HepG2 (cell line): ENCODE measurements at regions of chr6 and their contacts with region 1.

Region 1: DNA sequence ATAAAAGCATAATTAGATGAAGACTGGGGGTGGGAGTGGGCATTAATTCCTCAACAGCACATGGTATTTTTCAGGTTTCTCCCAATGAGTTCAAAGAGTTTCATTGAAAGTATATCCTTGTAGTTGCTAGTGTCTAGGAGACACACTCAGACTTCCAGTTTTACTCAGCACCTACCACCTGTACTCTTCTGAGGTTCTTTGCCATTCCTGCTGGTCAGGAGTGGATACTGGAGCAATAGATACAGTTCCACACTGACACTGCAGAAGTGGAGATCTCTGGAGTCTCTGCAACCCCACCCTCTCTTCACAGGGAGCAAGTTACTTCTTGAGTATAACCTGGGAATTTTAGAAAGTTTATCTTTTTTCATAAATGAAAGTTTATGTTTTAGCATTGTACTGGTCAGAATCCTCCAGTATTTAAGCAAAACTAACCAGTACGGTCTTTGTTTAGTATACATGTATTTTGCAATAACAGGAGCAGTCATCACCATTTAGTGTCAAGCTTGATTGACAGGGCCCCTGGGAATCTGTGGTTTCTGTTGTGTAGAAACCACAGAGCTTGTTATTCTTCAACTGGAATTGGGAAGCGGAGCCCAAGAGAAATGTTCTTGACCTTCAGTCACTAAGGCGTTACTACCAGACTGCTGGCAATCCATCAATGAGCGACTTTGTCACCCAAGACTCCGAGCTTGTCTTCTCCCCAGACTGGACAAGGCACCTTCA is 148.1 kb downstream of the ZDHHC14 start:
- DNase-seq: peak; percentile 73
- ATAC-seq: no peak
- H3K4me3 ChIP-seq: no peak overlapping the region
- H3K27ac ChIP-seq: peak overlapping the region; percentile 96
- H3K4me1 ChIP-seq: peaks cover 94% of the 10 kb centered on the region
- H3K27me3 ChIP-seq: no peaks in the 10 kb centered on the region
- CTCF ChIP-seq: no peak
- EP300 ChIP-seq: peak in 1 of 2 experiments; percentile 51; a peak in 1 of 4 replicates
- POLR2A ChIP-seq: no peak
- RAD21 ChIP-seq: no peak

Region 2: GRCh38 chr6:157264701-157265100 is 264.4 kb before region 1 on chr6:
- CTCF ChIA-PET with region 1: no interaction called
- POLR2A ChIA-PET with region 1: no interaction called
- in situ Hi-C with region 1: no loop called
- intact Hi-C with region 1: no loop called
- DNase-seq: no peak
- ATAC-seq: no peak
- H3K4me3 ChIP-seq: no peak overlapping the region
- H3K27ac ChIP-seq: no peak overlapping the region
- H3K4me1 ChIP-seq: peaks cover 10% of the 10 kb centered on the region
- H3K27me3 ChIP-seq: peaks cover 8 to 53% of the 10 kb centered on the region in 2 experiments; a peak in 4 of 5 replicates
- CTCF ChIP-seq: no peak
- EP300 ChIP-seq: no peak
- POLR2A ChIP-seq: no peak
- RAD21 ChIP-seq: no peak

Region 3: GRCh38 chr6:157379656-157380454 is 149.2 kb before region 1 on chr6:
- CTCF ChIA-PET with region 1: no interaction called
- POLR2A ChIA-PET with region 1: interaction called, 7 read pairs
- in situ Hi-C with region 1: no loop called
- intact Hi-C with region 1: loop called (anchors 2 kb)
- DNase-seq: peak; percentile 90
- ATAC-seq: peak; percentile 94
- H3K4me3 ChIP-seq: peak overlapping the region; percentile 91 to 95 (median 92)
- H3K27ac ChIP-seq: peak overlapping the region; percentile 56
- H3K4me1 ChIP-seq: peaks cover 47% of the 10 kb centered on the region
- H3K27me3 ChIP-seq: no peaks in the 10 kb centered on the region; a peak in 1 of 5 replicates
- CTCF ChIP-seq: peak; percentile 19; the same call in 1 of the 2 replicates
- EP300 ChIP-seq: no peak
- POLR2A ChIP-seq: peak in 1 of 2 experiments; percentile 49; a peak in 2 of 4 replicates
- RAD21 ChIP-seq: no peak

Region 4: DNA sequence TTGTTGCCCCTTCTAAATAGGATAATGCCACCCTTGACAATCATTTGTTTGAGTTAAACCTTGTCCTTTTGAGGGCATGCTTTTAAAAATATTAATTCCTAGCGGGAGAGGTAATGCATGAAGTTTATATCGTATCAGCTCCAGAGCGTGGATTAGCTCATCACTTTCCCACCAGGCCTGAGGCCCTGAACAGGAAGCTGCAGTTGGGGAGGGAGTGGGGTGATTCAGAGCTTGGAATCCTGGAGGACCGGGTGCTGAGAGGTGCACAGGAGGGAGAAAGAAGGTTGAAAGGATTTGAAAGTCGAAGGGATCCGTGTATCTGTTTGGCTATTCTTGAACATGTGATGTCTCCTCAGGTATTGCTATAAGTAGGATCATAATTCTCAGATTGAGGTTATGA is 123.1 kb before region 1 on chr6:
- CTCF ChIA-PET with region 1: no interaction called
- POLR2A ChIA-PET with region 1: no interaction called
- in situ Hi-C with region 1: no loop called
- intact Hi-C with region 1: no loop called
- DNase-seq: no peak
- ATAC-seq: no peak
- H3K4me3 ChIP-seq: no peak overlapping the region
- H3K27ac ChIP-seq: no peak overlapping the region
- H3K4me1 ChIP-seq: peaks cover 15% of the 10 kb centered on the region
- H3K27me3 ChIP-seq: no peaks in the 10 kb centered on the region
- CTCF ChIP-seq: no peak
- EP300 ChIP-seq: no peak
- POLR2A ChIP-seq: no peak
- RAD21 ChIP-seq: no peak

Region 5: GRCh38 chr6:157434349-157435033 is 94.6 kb before region 1 on chr6:
- CTCF ChIA-PET with region 1: no interaction called
- POLR2A ChIA-PET with region 1: interaction called, 13 read pairs
- in situ Hi-C with region 1: no loop called
- intact Hi-C with region 1: no loop called
- DNase-seq: peak; percentile 90
- ATAC-seq: peak; percentile 95
- H3K4me3 ChIP-seq: peak overlapping the region in 1 of 3 experiments; percentile 29; a peak in 2 of 6 replicates
- H3K27ac ChIP-seq: peak overlapping the region; percentile 38
- H3K4me1 ChIP-seq: peaks cover 26% of the 10 kb centered on the region
- H3K27me3 ChIP-seq: no peaks in the 10 kb centered on the region
- CTCF ChIP-seq: no peak
- EP300 ChIP-seq: peak in 1 of 2 experiments; percentile 61; a peak in 2 of 4 replicates
- POLR2A ChIP-seq: no peak
- RAD21 ChIP-seq: no peak; the same call in 1 of the 2 replicates

Region 6: GRCh38 chr6:157514659-157515496 is 14.2 kb before region 1 on chr6:
- CTCF ChIA-PET with region 1: no interaction called
- POLR2A ChIA-PET with region 1: interaction called, 186 read pairs
- in situ Hi-C with region 1: no loop called
- intact Hi-C with region 1: loop called (anchors 1 kb)
- DNase-seq: peak; percentile 75
- ATAC-seq: peak; percentile 61
- H3K4me3 ChIP-seq: no peak overlapping the region
- H3K27ac ChIP-seq: peak overlapping the region; percentile 22
- H3K4me1 ChIP-seq: peaks cover 83% of the 10 kb centered on the region
- H3K27me3 ChIP-seq: no peaks in the 10 kb centered on the region
- CTCF ChIP-seq: no peak
- EP300 ChIP-seq: peak in 1 of 2 experiments; percentile 53; a peak in 1 of 4 replicates
- POLR2A ChIP-seq: no peak
- RAD21 ChIP-seq: no peak

Region 7: GRCh38 chr6:157585274-157586087 is 56.4 kb after region 1 on chr6:
- CTCF ChIA-PET with region 1: no interaction called
- POLR2A ChIA-PET with region 1: interaction called, 31 read pairs
- in situ Hi-C with region 1: no loop called
- intact Hi-C with region 1: no loop called
- DNase-seq: no peak
- ATAC-seq: peak; percentile 41
- H3K4me3 ChIP-seq: no peak overlapping the region
- H3K27ac ChIP-seq: peak overlapping the region; percentile 67
- H3K4me1 ChIP-seq: peaks cover 28% of the 10 kb centered on the region
- H3K27me3 ChIP-seq: no peaks in the 10 kb centered on the region
- CTCF ChIP-seq: no peak
- EP300 ChIP-seq: no peak
- POLR2A ChIP-seq: no peak
- RAD21 ChIP-seq: no peak

Region 8: DNA sequence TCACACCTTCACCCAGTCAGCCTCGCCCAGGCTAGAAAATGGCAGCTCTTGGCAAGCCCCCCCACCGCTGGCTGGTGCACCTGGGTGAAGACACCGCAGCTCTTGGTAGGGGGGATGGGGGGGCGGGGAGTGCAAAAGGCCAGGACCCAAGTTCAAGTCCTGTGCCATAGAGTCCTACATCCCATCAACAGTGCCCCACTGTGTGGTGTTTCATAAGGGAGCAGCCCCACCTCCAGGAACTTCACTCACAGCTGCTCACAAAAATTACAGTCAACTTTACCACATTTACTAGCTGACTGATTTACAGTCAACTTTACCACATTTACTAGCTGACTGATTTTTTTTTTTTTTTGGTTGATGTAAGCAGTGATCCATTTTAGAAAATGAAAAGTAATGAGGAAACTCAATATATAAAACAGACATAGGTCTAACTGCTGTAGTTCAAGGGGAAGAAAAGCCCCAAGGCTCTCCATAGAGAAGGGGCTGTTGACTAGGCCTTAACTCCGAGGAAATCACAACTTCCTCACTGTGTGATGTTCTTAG is 85.0 kb after region 1 on chr6:
- CTCF ChIA-PET with region 1: no interaction called
- POLR2A ChIA-PET with region 1: interaction called, 18 read pairs
- in situ Hi-C with region 1: no loop called
- intact Hi-C with region 1: no loop called
- DNase-seq: peak; percentile 41
- ATAC-seq: peak; percentile 76
- H3K4me3 ChIP-seq: peak overlapping the region in 1 of 3 experiments; percentile 4; a peak in 1 of 6 replicates
- H3K27ac ChIP-seq: peak overlapping the region; percentile 68
- H3K4me1 ChIP-seq: peaks cover 37% of the 10 kb centered on the region
- H3K27me3 ChIP-seq: no peaks in the 10 kb centered on the region
- CTCF ChIP-seq: peak; percentile 85
- EP300 ChIP-seq: no peak
- POLR2A ChIP-seq: no peak
- RAD21 ChIP-seq: peak; percentile 57; the same call in 1 of the 2 replicates